Head of caudate nucleus (tissue), 42 donors: ENCODE measurements at regions of chr9 and their contacts with region 1.

Region 1: GRCh38 chr9:35732122-35732799 is at the starts of genes CREB3 and TLN1:
- DNase-seq: peak; percentile 90 to 99 (median 98)

Region 2: DNA sequence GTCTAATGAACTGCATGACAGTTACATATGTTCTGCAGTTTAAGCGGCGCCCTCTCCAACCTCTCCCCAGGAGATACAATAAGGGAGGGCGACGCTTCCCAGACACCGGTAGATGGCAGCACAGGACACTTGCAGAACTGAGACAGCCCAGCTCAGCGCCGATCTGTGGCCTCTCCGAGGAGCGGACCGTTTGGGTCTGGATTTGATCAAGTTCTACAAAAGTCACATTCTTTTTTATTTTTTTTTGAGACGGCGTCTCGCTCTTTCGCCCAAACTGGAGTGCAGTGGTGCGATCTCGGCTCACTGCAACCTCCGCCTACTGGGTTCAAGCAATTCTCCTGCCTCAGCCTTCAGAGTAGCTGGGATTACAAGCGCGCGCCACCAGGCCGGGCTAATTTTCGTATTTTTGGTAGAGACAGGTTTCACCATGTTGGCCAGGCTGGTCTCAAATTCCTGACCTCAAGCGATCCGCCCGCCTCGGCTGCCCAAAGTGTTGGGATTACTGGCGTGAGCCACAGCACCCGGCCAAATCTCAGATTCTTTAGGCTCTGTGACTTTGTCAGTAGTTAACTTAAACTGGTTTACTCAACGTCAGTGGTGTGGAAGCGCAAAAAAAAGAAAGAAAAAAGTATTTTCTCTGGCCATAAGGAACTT is 615.2 kb before region 1 on chr9:
- intact Hi-C with region 1: no loop called
- DNase-seq: peak; percentile 84 to 98 (median 94)

Region 3: GRCh38 chr9:35603987-35604577 is 128.2 kb before region 1 on chr9:
- intact Hi-C with region 1: loop called (anchors 5 kb)
- DNase-seq: peak; percentile 97 to 100 (median 99)

Region 4: GRCh38 chr9:35646533-35647265 is 85.6 kb before region 1 on chr9:
- intact Hi-C with region 1: loop called (anchors 2 kb)
- DNase-seq: peak; percentile 77 to 97 (median 92)

Region 5: DNA sequence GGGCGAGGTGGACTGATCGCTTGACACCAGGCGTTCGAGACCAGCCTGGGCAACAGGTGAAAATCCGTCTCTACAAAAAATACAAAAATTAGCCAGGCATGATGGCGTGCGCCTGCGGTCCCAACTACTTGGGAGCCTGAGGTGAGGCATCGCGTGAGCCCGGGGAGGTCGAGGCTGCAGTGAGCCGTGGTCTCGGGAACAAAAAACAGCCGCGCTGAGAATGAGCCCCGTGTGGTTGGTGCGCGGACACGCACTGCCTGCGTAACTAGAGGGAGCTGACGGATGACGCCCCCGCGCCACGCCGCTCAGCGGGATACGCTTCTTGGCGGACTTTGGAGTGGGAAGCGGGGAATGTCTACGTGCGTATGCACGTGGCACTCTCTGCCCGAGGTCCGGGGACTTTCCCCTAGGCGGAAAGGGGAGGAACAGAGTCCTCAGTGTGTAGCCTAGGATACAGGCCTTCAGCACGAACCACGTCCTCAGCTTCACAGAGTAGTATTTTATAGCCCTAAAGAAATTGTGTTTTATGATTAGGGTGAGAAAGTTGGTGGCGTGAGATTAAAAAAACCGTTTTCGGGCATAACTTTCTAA is 74.6 kb before region 1 on chr9 and contains the start of gene RMRP:
- intact Hi-C with region 1: loop called (anchors 2 kb)
- DNase-seq: peak; percentile 89 to 100 (median 98)

Region 6: DNA sequence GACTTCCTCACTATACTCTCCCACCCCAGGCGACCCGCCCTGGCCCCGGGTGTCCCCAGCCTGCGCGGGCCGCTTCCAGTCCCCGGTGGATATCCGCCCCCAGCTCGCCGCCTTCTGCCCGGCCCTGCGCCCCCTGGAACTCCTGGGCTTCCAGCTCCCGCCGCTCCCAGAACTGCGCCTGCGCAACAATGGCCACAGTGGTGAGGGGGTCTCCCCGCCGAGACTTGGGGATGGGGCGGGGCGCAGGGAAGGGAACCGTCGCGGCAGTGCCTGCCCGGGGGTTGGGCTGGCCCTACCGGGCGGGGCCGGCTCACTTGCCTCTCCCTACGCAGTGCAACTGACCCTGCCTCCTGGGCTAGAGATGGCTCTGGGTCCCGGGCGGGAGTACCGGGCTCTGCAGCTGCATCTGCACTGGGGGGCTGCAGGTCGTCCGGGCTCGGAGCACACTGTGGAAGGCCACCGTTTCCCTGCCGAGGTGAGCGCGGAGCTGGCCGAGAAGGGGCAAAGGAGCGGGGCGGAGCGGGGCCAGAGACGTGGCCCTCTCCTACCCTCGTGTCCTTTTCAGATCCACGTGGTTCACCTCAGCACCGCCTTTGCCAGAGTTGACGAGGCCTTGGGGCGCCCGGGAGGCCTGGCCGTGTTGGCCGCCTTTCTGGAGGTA is 56.4 kb before region 1 on chr9:
- intact Hi-C with region 1: no loop called
- DNase-seq: peak in 17 of 42 donors; percentile 17 to 60 (median 43)

Region 7: GRCh38 chr9:36036780-36037548 is 304.7 kb after region 1 on chr9 and contains the start of gene RECK:
- intact Hi-C with region 1: no loop called
- DNase-seq: peak; percentile 86 to 97 (median 93)